ENCODE measurements at regions of chr1 and their contacts with region 1.

Region 1: GRCh38 chr1:186482661-186483255 is 21.8 kb upstream of the PDC start:
- DNase-seq: peak; percentile 27 to 51 (median 32)
- ATAC-seq: peak; percentile 27
- H3K4me3 ChIP-seq: no peak overlapping the region
- H3K27ac ChIP-seq: no peak overlapping the region
- H3K4me1 ChIP-seq: no peaks in the 10 kb centered on the region
- H3K27me3 ChIP-seq: no peaks in the 10 kb centered on the region
- CTCF ChIP-seq: peak; percentile 38 to 74 (median 62)
- POLR2A ChIP-seq: no peak

Region 2: DNA sequence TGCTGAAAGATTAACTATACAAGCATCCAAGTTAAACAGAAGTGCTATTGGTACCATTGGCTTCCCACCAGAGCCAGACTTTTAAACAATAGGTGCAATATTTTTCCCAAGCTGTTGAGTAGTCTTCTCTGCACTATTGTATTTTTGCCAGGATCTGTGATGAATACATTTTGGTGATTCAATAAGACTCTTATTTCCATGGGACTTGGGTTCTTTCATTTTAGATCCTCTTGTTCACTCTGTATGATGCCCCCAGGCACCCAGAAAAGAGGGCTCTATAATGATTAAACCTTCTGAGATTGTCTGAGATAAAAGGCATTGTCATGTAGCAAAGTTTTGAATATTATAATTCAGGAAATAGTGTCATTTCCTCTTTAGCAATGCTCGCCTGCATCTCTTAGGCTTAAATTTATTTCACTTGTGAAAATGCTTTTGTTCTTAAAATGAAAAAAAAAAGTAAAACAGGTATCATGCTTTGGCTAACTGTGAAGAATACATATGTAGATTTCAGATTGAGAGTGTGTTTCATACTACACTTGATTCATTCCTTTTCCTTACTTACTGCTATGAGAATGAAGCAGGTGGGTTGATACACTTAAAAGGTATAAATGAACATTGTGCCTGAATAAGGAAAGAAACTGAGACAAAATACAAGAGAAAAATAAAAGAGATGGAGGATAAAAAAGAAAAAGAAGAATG is 473.6 kb before region 1 on chr1:
- intact Hi-C with region 1: no loop called
- DNase-seq: no peak
- ATAC-seq: no peak
- H3K4me3 ChIP-seq: no peak overlapping the region
- H3K27ac ChIP-seq: no peak overlapping the region
- H3K4me1 ChIP-seq: no peaks in the 10 kb centered on the region
- H3K27me3 ChIP-seq: no peaks in the 10 kb centered on the region
- CTCF ChIP-seq: no peak
- POLR2A ChIP-seq: no peak

Region 3: GRCh38 chr1:186994897-186995296 is 512.1 kb after region 1 on chr1:
- intact Hi-C with region 1: loop called (anchors 10 kb)
- DNase-seq: no peak
- ATAC-seq: no peak
- H3K4me3 ChIP-seq: no peak overlapping the region
- H3K27ac ChIP-seq: no peak overlapping the region
- H3K4me1 ChIP-seq: peaks cover 11% of the 10 kb centered on the region
- H3K27me3 ChIP-seq: no peaks in the 10 kb centered on the region
- CTCF ChIP-seq: no peak
- POLR2A ChIP-seq: no peak

Measured in body of pancreas (tissue), 4 donors.